H1 (cell line): ENCODE measurements at regions of chr9 and their contacts with region 1.

Region 1: DNA sequence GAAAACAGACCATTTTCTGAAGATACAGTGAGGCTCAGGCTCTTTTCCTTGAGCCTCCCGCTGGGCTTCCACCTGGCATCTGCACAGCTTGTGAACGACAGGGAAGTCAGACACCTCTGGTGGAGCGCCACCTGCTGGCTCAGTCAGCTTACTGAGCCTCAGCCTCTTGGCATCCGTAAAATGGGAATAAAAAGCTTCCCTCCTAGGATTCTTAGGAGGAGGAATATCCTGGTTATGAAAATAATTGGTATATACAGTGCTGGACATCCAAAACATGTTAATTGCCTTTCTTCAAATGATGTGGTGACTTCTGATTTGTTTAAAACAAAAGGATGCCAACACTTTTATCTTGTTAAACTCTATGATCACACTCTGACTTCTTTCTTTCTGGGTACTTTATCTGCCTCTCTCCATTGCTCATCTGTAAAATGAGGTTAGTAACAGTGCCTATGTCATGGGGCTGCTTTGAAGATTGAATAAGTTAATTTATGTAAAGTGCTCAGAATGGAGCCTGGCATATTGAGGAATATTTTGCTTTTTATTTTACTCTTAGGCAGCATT is 67.5 kb downstream of the MAMDC2 start:
- DNase-seq: peak; percentile 64 to 89
- H3K4me3 ChIP-seq: no peak overlapping the region
- H3K27ac ChIP-seq: no peak overlapping the region
- H3K4me1 ChIP-seq: peaks cover 0 to 7% (median 5%) of the 10 kb centered on the region in 4 experiments; a peak in 4 of 7 replicates
- H3K27me3 ChIP-seq: no peaks in the 10 kb centered on the region
- CTCF ChIP-seq: peak; percentile 83 to 92 (median 88)
- EP300 ChIP-seq: no peak; a peak in 1 of 3 replicates
- POLR2A ChIP-seq: no peak
- RAD21 ChIP-seq: peak; percentile 84 to 88

Region 2: GRCh38 chr9:69971643-69972449 is 139.3 kb before region 1 on chr9:
- CTCF ChIA-PET with region 1: interaction called, 126 read pairs
- POLR2A ChIA-PET with region 1: no interaction called
- DNase-seq: peak; percentile 50 to 85
- H3K4me3 ChIP-seq: no peak overlapping the region
- H3K27ac ChIP-seq: no peak overlapping the region
- H3K4me1 ChIP-seq: peaks cover 0 to 2% (median under 1%) of the 10 kb centered on the region in 4 experiments; a peak in 2 of 7 replicates
- H3K27me3 ChIP-seq: no peaks in the 10 kb centered on the region
- CTCF ChIP-seq: peak; percentile 88 to 95 (median 90)
- EP300 ChIP-seq: no peak
- POLR2A ChIP-seq: no peak
- RAD21 ChIP-seq: peak; percentile 97 to 99

Region 3: DNA sequence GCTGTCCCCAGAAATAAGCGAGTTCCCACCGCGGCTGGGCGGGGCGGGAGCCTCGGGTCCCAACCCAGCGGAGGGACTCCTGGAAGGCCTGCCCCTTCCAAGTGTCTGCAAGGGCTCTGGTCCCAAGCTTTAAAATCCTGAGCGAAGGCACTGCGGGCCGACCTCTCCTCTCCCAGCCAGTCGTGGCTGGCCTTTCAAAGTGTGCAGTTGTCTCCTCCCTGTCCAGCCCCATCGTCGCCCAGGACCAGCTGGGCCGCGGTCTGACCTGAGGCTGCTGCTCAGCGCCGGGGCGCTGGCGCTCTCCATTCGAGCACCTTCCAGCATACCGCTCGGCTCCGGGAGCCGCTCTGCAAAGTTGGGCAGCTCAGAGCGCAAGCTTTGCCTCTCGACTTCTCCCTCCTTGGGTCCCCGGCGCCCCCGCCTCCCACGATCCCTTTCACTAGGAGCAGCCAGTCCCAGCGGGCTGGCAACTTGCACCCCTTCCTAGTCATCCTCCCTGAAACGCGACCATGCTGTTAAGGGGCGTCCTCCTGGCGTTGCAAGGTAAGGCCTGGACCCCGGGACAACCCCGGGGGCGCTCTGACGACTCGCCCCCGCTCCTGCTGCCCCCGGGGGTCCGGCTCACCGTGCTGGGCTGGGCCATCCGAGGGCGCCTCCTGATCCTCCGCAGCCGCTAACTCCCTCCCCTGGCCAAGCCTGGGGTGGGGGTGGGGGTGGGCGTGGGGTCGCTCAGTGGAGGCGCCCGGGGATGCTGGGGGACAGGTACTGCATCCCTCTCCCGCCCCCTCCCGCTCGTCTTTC is 67.2 kb before region 1 on chr9 and contains the start of gene MAMDC2:
- CTCF ChIA-PET with region 1: interaction called, 42 read pairs
- POLR2A ChIA-PET with region 1: interaction called, 9 read pairs
- DNase-seq: peak in 1 of 2 experiments; percentile 84
- H3K4me3 ChIP-seq: peak within 1 kb of the TSS; percentile 54 to 79 (median 58)
- H3K27ac ChIP-seq: no peak within 1 kb of the TSS
- H3K4me1 ChIP-seq: peaks cover 6 to 14% (median 10%) of the 10 kb centered on the region in 4 experiments
- H3K27me3 ChIP-seq: no peaks in the 10 kb centered on the region
- CTCF ChIP-seq: no peak
- EP300 ChIP-seq: no peak
- POLR2A ChIP-seq: peak; percentile 49 to 72; a peak in 2 of 3 replicates
- RAD21 ChIP-seq: no peak
- total RNA-seq, gene MAMDC2: 15.3 and 15.4 TPM in 2 replicates

Region 4: DNA sequence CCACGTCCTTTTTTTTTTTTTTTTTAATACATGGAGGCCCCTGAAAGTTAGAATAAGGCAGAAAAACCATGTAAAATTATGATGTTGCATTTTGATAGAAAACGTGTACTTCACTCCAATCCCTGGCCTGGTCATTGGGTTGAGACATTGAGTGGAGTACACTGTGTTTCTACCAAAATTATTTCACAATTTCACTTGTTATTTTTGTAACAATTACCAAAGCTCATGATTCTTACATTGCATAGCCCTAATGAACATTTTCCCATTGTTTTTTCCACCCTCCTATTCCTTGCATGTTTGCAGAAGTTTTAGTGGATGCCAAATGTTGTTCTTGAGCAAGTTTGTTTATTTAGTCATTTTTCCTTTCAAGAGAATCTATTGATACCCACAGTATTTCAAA is 45.5 kb before region 1 on chr9:
- CTCF ChIA-PET with region 1: interaction called, 15 read pairs
- POLR2A ChIA-PET with region 1: no interaction called
- DNase-seq: no peak
- H3K4me3 ChIP-seq: no peak overlapping the region
- H3K27ac ChIP-seq: no peak overlapping the region
- H3K4me1 ChIP-seq: peaks cover 0 to 7% (median 3%) of the 10 kb centered on the region in 4 experiments; a peak in 3 of 7 replicates
- H3K27me3 ChIP-seq: no peaks in the 10 kb centered on the region
- CTCF ChIP-seq: no peak
- EP300 ChIP-seq: no peak
- POLR2A ChIP-seq: no peak
- RAD21 ChIP-seq: no peak

Region 5: GRCh38 chr9:70080481-70081119 is 30.5 kb before region 1 on chr9:
- CTCF ChIA-PET with region 1: interaction called, 13 read pairs
- POLR2A ChIA-PET with region 1: interaction called, 3 read pairs
- DNase-seq: no peak
- H3K4me3 ChIP-seq: no peak overlapping the region
- H3K27ac ChIP-seq: no peak overlapping the region
- H3K4me1 ChIP-seq: peaks cover 0 to 5% (median 0%) of the 10 kb centered on the region in 4 experiments; a peak in 1 of 7 replicates
- H3K27me3 ChIP-seq: no peaks in the 10 kb centered on the region
- CTCF ChIP-seq: no peak
- EP300 ChIP-seq: no peak
- POLR2A ChIP-seq: no peak
- RAD21 ChIP-seq: no peak

Region 6: GRCh38 chr9:70100362-70100761 is 10.8 kb before region 1 on chr9:
- CTCF ChIA-PET with region 1: interaction called, 64 read pairs
- POLR2A ChIA-PET with region 1: no interaction called
- DNase-seq: no peak
- H3K4me3 ChIP-seq: no peak overlapping the region
- H3K27ac ChIP-seq: no peak overlapping the region
- H3K4me1 ChIP-seq: peaks cover 0 to 4% (median 0%) of the 10 kb centered on the region in 4 experiments; a peak in 2 of 7 replicates
- H3K27me3 ChIP-seq: no peaks in the 10 kb centered on the region
- CTCF ChIP-seq: no peak
- EP300 ChIP-seq: no peak
- POLR2A ChIP-seq: no peak
- RAD21 ChIP-seq: no peak

Region 7: GRCh38 chr9:70229579-70229978 is 118.5 kb after region 1 on chr9:
- CTCF ChIA-PET with region 1: interaction called, 47 read pairs
- POLR2A ChIA-PET with region 1: no interaction called
- DNase-seq: no peak
- H3K4me3 ChIP-seq: no peak overlapping the region
- H3K27ac ChIP-seq: no peak overlapping the region
- H3K4me1 ChIP-seq: no peaks in the 10 kb centered on the region
- H3K27me3 ChIP-seq: no peaks in the 10 kb centered on the region
- CTCF ChIP-seq: peak in 2 of 3 experiments; percentile 15 to 39; a peak in 2 of 4 replicates
- EP300 ChIP-seq: no peak
- POLR2A ChIP-seq: no peak
- RAD21 ChIP-seq: peak in 1 of 2 experiments; percentile 68